CD4-positive, alpha-beta memory T cell (primary cell): ENCODE measurements at regions of chr14 and their contacts with region 1.

Region 1: DNA sequence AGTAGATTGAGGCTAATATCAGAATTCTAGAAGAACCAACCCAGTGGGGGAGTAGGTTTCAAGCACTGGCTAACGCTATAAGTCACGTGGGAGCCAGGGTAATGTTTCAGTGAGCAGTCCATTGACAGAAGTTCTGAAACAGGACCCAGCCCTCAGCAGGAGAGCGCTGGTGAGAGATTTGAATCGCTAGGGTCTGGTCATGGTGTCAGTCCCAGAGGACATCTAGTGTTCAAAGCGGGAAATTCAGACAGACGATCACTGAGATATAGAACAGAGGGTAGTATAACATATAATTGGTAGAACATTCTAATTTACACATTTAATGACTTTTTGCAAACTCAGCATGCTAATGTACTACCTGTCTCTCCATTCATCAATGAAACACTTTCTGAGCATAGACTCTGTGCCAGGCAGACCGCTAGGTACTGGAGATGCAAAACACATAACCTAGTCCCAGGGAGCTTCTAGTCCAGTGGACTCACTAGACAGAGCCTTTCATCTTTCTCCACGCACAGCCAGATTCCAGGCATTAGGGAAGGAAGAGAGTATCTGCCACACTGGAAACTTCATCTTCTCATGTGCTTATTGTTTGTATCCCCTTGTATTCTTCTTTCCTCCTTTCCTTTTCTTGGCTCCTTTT is 35.4 kb upstream of the RNASE3 start:
- DNase-seq: peak; percentile 47 to 62 (median 57)
- H3K4me3 ChIP-seq: no peak overlapping the region
- H3K4me3 Mint-ChIP-seq: no peak overlapping the region
- H3K27ac ChIP-seq: no peak overlapping the region
- H3K27ac Mint-ChIP-seq: no peak overlapping the region
- H3K4me1 ChIP-seq: no peaks in the 10 kb centered on the region
- H3K4me1 Mint-ChIP-seq: peaks cover 0 to 8% (median 4%) of the 10 kb centered on the region in 4 donors
- H3K27me3 ChIP-seq: peaks cover 3% of the 10 kb centered on the region
- H3K27me3 Mint-ChIP-seq: peaks cover 16 to 17% of the 10 kb centered on the region in 2 donors

Region 2: GRCh38 chr14:20662968-20663732 is 192.6 kb before region 1 on chr14:
- CTCF ChIA-PET with region 1: interaction called, 3 read pairs
- POLR2A ChIA-PET with region 1: no interaction called
- intact Hi-C with region 1: loop called (anchors 1 kb)
- DNase-seq: peak; percentile 74 to 78 (median 77)
- H3K4me3 ChIP-seq: peak overlapping the region; percentile 43 to 54
- H3K4me3 Mint-ChIP-seq: peak overlapping the region; percentile 78 to 88 (median 81)
- H3K27ac ChIP-seq: no peak overlapping the region
- H3K27ac Mint-ChIP-seq: peak overlapping the region in 6 of 7 donors; percentile 0 to 82 (median 50)
- H3K4me1 ChIP-seq: peaks cover 28% of the 10 kb centered on the region
- H3K4me1 Mint-ChIP-seq: peaks cover 18 to 38% (median 24%) of the 10 kb centered on the region in 4 donors
- H3K27me3 ChIP-seq: no peaks in the 10 kb centered on the region
- H3K27me3 Mint-ChIP-seq: peaks cover 5 to 6% of the 10 kb centered on the region in 2 donors

Region 3: GRCh38 chr14:20697273-20698017 is 158.3 kb before region 1 on chr14:
- CTCF ChIA-PET with region 1: interaction called, 64 read pairs
- POLR2A ChIA-PET with region 1: no interaction called
- intact Hi-C with region 1: loop called (anchors 1 kb)
- DNase-seq: peak; percentile 55 to 65 (median 60)
- H3K4me3 ChIP-seq: no peak overlapping the region
- H3K4me3 Mint-ChIP-seq: no peak overlapping the region
- H3K27ac ChIP-seq: no peak overlapping the region
- H3K27ac Mint-ChIP-seq: no peak overlapping the region
- H3K4me1 ChIP-seq: no peaks in the 10 kb centered on the region
- H3K4me1 Mint-ChIP-seq: no peaks in the 10 kb centered on the region
- H3K27me3 ChIP-seq: no peaks in the 10 kb centered on the region
- H3K27me3 Mint-ChIP-seq: no peaks in the 10 kb centered on the region

Region 4: GRCh38 chr14:20866963-20867362 is 11.2 kb after region 1 on chr14:
- CTCF ChIA-PET with region 1: interaction called, 57 read pairs
- POLR2A ChIA-PET with region 1: no interaction called
- intact Hi-C with region 1: no loop called
- DNase-seq: no peak
- H3K4me3 ChIP-seq: no peak overlapping the region
- H3K4me3 Mint-ChIP-seq: no peak overlapping the region
- H3K27ac ChIP-seq: no peak overlapping the region
- H3K27ac Mint-ChIP-seq: no peak overlapping the region
- H3K4me1 ChIP-seq: no peaks in the 10 kb centered on the region
- H3K4me1 Mint-ChIP-seq: no peaks in the 10 kb centered on the region
- H3K27me3 ChIP-seq: peaks cover 4% of the 10 kb centered on the region
- H3K27me3 Mint-ChIP-seq: peaks cover 12 to 32% of the 10 kb centered on the region in 2 donors

Region 5: GRCh38 chr14:20907214-20907613 is 51.4 kb after region 1 on chr14:
- CTCF ChIA-PET with region 1: no interaction called
- POLR2A ChIA-PET with region 1: no interaction called
- intact Hi-C with region 1: no loop called
- DNase-seq: no peak
- H3K4me3 ChIP-seq: no peak overlapping the region
- H3K4me3 Mint-ChIP-seq: no peak overlapping the region
- H3K27ac ChIP-seq: no peak overlapping the region
- H3K27ac Mint-ChIP-seq: no peak overlapping the region
- H3K4me1 ChIP-seq: no peaks in the 10 kb centered on the region
- H3K4me1 Mint-ChIP-seq: no peaks in the 10 kb centered on the region
- H3K27me3 ChIP-seq: no peaks in the 10 kb centered on the region
- H3K27me3 Mint-ChIP-seq: peaks cover 13 to 19% of the 10 kb centered on the region in 2 donors

Region 6: DNA sequence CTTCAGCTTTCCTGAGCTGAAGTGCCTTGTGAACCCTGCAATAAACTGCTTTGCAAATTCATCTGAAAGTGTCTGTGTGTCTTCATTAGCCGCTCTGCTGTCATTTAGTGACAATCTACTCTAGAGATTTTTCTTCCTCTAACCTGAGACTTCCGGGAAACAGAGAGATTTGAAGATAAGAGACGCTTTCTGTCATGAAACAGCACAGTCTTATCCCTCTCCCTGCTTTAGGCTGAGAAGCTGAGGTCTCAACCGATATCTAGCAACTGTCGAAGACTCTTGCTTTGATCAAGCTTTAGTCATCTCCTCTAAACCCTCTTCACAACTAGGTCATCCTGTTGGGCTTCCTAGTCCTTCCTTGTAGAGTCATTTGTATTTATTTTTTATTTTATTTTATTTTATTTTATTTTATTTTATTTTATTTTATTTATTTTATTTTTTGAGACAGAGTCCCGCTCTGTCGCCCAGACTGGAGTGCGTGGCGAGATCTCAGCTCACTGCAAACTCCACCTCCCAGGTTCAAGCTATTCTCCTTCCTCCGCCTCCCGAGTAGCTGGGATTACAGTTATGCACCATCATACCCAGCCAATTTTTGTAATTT is 100.7 kb after region 1 on chr14:
- CTCF ChIA-PET with region 1: interaction called, 14 read pairs
- POLR2A ChIA-PET with region 1: no interaction called
- intact Hi-C with region 1: no loop called
- DNase-seq: peak in 2 of 5 donors; percentile 9 to 10
- H3K4me3 ChIP-seq: no peak overlapping the region
- H3K4me3 Mint-ChIP-seq: peak overlapping the region in 2 of 8 donors; percentile 35 to 65
- H3K27ac ChIP-seq: no peak overlapping the region
- H3K27ac Mint-ChIP-seq: peak overlapping the region in 6 of 7 donors; percentile 17 to 75 (median 50)
- H3K4me1 ChIP-seq: peaks cover 9% of the 10 kb centered on the region
- H3K4me1 Mint-ChIP-seq: peaks cover 8 to 14% (median 11%) of the 10 kb centered on the region in 4 donors
- H3K27me3 ChIP-seq: no peaks in the 10 kb centered on the region
- H3K27me3 Mint-ChIP-seq: peaks cover 5 to 10% of the 10 kb centered on the region in 2 donors

Region 7: GRCh38 chr14:21103710-21104447 is 248.1 kb after region 1 on chr14:
- CTCF ChIA-PET with region 1: interaction called, 3 read pairs
- POLR2A ChIA-PET with region 1: no interaction called
- intact Hi-C with region 1: loop called (anchors 5 kb)
- DNase-seq: peak; percentile 92 to 95 (median 95)
- H3K4me3 ChIP-seq: peak overlapping the region; percentile 96
- H3K4me3 Mint-ChIP-seq: peak overlapping the region; percentile 85 to 94 (median 90)
- H3K27ac ChIP-seq: peak overlapping the region; percentile 90
- H3K27ac Mint-ChIP-seq: peak overlapping the region; percentile 91 to 99 (median 97)
- H3K4me1 ChIP-seq: peaks cover 29% of the 10 kb centered on the region
- H3K4me1 Mint-ChIP-seq: peaks cover 15 to 40% (median 23%) of the 10 kb centered on the region in 4 donors
- H3K27me3 ChIP-seq: no peaks in the 10 kb centered on the region
- H3K27me3 Mint-ChIP-seq: no peaks in the 10 kb centered on the region